HCT116 (cell line): ENCODE measurements at regions of chr12 and their contacts with region 1.

Region 1: GRCh38 chr12:115998119-115998633 is 279.3 kb downstream of the MED13L start:
- DNase-seq: peak; percentile 32
- ATAC-seq: peak; percentile 69
- H3K4me3 ChIP-seq: no peak overlapping the region
- H3K27ac ChIP-seq: peak overlapping the region; percentile 14; the same call in 1 of the 2 replicates
- H3K4me1 ChIP-seq: peaks cover 0 to 9% of the 10 kb centered on the region in 2 experiments; a peak in 1 of 4 replicates
- H3K27me3 ChIP-seq: no peaks in the 10 kb centered on the region
- CTCF ChIP-seq: peak; percentile 48 to 82 (median 68); a peak in 5 of 6 replicates
- POLR2A ChIP-seq: no peak
- RAD21 ChIP-seq: peak; percentile 61

Region 2: GRCh38 chr12:115411121-115411520 is 587.1 kb before region 1 on chr12:
- CTCF ChIA-PET with region 1: no interaction called
- POLR2A ChIA-PET with region 1: no interaction called
- RAD21 ChIA-PET with region 1: no interaction called
- intact Hi-C with region 1: no loop called
- DNase-seq: no peak
- ATAC-seq: no peak
- H3K4me3 ChIP-seq: no peak overlapping the region
- H3K27ac ChIP-seq: no peak overlapping the region
- H3K4me1 ChIP-seq: no peaks in the 10 kb centered on the region
- H3K27me3 ChIP-seq: no peaks in the 10 kb centered on the region; the same call in 1 of the 2 replicates
- CTCF ChIP-seq: no peak
- POLR2A ChIP-seq: no peak
- RAD21 ChIP-seq: no peak

Region 3: DNA sequence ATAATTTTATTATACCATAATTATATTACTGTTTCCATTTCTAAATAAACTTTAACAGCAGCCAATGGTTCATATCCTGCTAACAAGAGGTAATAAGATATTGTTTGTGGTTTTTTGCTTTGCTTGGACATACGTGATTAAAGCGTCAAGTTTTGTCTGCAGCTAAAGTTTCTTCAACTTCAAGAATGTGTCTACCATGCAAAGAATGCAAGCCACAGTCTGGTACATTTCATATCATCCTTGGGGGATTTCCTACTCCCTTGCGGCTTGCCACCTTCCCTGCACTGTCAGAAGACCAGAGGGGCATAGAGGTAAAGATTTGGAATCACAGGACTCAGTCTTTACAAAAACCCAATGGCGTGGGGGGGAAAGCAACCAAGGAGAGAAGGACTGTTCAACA is 154.1 kb after region 1 on chr12:
- CTCF ChIA-PET with region 1: no interaction called
- POLR2A ChIA-PET with region 1: no interaction called
- RAD21 ChIA-PET with region 1: no interaction called
- intact Hi-C with region 1: no loop called
- DNase-seq: no peak
- ATAC-seq: no peak
- H3K4me3 ChIP-seq: no peak overlapping the region
- H3K27ac ChIP-seq: no peak overlapping the region
- H3K4me1 ChIP-seq: peaks cover 0 to 11% of the 10 kb centered on the region in 2 experiments; a peak in 2 of 4 replicates
- H3K27me3 ChIP-seq: no peaks in the 10 kb centered on the region
- CTCF ChIP-seq: no peak
- POLR2A ChIP-seq: no peak
- RAD21 ChIP-seq: no peak

Region 4: GRCh38 chr12:116236148-116236731 is 238.1 kb after region 1 on chr12:
- CTCF ChIA-PET with region 1: no interaction called
- POLR2A ChIA-PET with region 1: no interaction called
- RAD21 ChIA-PET with region 1: no interaction called
- intact Hi-C with region 1: loop called (anchors 2 kb)
- DNase-seq: no peak
- ATAC-seq: peak; percentile 73
- H3K4me3 ChIP-seq: no peak overlapping the region
- H3K27ac ChIP-seq: no peak overlapping the region
- H3K4me1 ChIP-seq: peaks cover 12 to 26% of the 10 kb centered on the region in 2 experiments
- H3K27me3 ChIP-seq: no peaks in the 10 kb centered on the region
- CTCF ChIP-seq: peak; percentile 61 to 74 (median 74); a peak in 5 of 6 replicates
- POLR2A ChIP-seq: no peak
- RAD21 ChIP-seq: peak; percentile 82

Region 5: GRCh38 chr12:116559162-116559935 is 561.2 kb after region 1 on chr12 and contains the start of gene MAP1LC3B2:
- CTCF ChIA-PET with region 1: no interaction called
- POLR2A ChIA-PET with region 1: no interaction called
- RAD21 ChIA-PET with region 1: no interaction called
- intact Hi-C with region 1: no loop called
- DNase-seq: peak; percentile 36
- ATAC-seq: peak; percentile 88
- H3K4me3 ChIP-seq: peak within 1 kb of the TSS in 1 of 2 experiments; percentile 17; a peak in 2 of 4 replicates
- H3K27ac ChIP-seq: peak within 1 kb of the TSS; percentile 50
- H3K4me1 ChIP-seq: peaks cover 20 to 31% of the 10 kb centered on the region in 2 experiments
- H3K27me3 ChIP-seq: no peaks in the 10 kb centered on the region
- CTCF ChIP-seq: no peak
- POLR2A ChIP-seq: no peak
- RAD21 ChIP-seq: no peak
- total RNA-seq, gene MAP1LC3B2: 4.7 TPM